AG04450 (cell line): ENCODE measurements at regions of chr5 and their contacts with region 1.

Region 1: GRCh38 chr5:15995341-15996052 is 184.1 kb downstream of the MARCHF11 start:
- DNase-seq: no peak
- H3K4me3 ChIP-seq: no peak overlapping the region
- H3K27ac ChIP-seq: no peak overlapping the region
- H3K27me3 ChIP-seq: no peaks in the 10 kb centered on the region
- CTCF ChIP-seq: peak; percentile 73

Region 2: GRCh38 chr5:15105796-15106393 is 889.6 kb before region 1 on chr5:
- CTCF ChIA-PET with region 1: interaction called, 66 read pairs
- POLR2A ChIA-PET with region 1: no interaction called
- DNase-seq: no peak
- H3K4me3 ChIP-seq: no peak overlapping the region
- H3K27ac ChIP-seq: no peak overlapping the region
- H3K27me3 ChIP-seq: no peaks in the 10 kb centered on the region
- CTCF ChIP-seq: peak; percentile 82

Region 3: GRCh38 chr5:15383469-15383868 is 612.0 kb before region 1 on chr5:
- CTCF ChIA-PET with region 1: interaction called, 31 read pairs
- POLR2A ChIA-PET with region 1: no interaction called
- DNase-seq: no peak
- H3K4me3 ChIP-seq: no peak overlapping the region
- H3K27ac ChIP-seq: no peak overlapping the region
- H3K27me3 ChIP-seq: no peaks in the 10 kb centered on the region
- CTCF ChIP-seq: peak; percentile 68

Region 4: GRCh38 chr5:15463231-15463980 is 532.1 kb before region 1 on chr5:
- CTCF ChIA-PET with region 1: interaction called, 31 read pairs
- POLR2A ChIA-PET with region 1: no interaction called
- DNase-seq: peak; percentile 3
- H3K4me3 ChIP-seq: no peak overlapping the region
- H3K27ac ChIP-seq: no peak overlapping the region
- H3K27me3 ChIP-seq: no peaks in the 10 kb centered on the region
- CTCF ChIP-seq: peak; percentile 66

Region 5: DNA sequence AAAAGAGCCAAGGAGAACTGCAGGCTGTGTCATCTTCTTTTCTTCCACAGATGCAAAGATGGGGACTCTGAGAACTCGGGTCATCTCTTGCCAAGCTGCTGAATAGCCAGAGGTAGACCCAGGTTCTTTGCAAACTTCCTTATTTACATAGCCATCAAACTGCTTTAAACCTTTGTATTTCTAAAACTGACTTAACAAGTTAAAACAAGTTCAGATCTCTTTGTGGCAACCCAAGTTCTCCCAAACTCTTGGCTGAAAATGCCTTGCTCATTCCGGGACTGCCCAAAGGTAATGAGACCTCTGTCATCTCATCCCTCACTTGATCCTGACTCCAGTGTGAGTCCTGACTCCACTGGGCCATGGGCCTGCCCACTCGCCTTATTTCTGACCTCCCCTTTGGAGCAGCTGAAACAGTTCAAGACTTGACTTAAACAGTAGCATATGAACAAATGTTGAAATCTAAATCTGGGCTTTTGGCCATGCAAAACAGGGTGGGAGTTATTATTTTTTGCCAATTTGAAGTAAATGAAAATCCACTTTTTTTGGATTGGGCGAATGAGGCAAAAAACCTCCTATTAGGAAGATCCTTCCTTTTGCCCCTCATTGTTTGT is 444.9 kb before region 1 on chr5:
- CTCF ChIA-PET with region 1: no interaction called
- POLR2A ChIA-PET with region 1: no interaction called
- DNase-seq: no peak
- H3K4me3 ChIP-seq: no peak overlapping the region
- H3K27ac ChIP-seq: no peak overlapping the region
- H3K27me3 ChIP-seq: no peaks in the 10 kb centered on the region
- CTCF ChIP-seq: no peak

Region 6: GRCh38 chr5:15807871-15808270 is 187.6 kb before region 1 on chr5:
- CTCF ChIA-PET with region 1: interaction called, 13 read pairs
- POLR2A ChIA-PET with region 1: no interaction called
- DNase-seq: no peak
- H3K4me3 ChIP-seq: no peak overlapping the region
- H3K27ac ChIP-seq: no peak overlapping the region
- H3K27me3 ChIP-seq: no peaks in the 10 kb centered on the region
- CTCF ChIP-seq: peak; percentile 36

Region 7: GRCh38 chr5:15823398-15823797 is 172.1 kb before region 1 on chr5:
- CTCF ChIA-PET with region 1: interaction called, 32 read pairs
- POLR2A ChIA-PET with region 1: no interaction called
- DNase-seq: no peak
- H3K4me3 ChIP-seq: no peak overlapping the region
- H3K27ac ChIP-seq: no peak overlapping the region
- H3K27me3 ChIP-seq: no peaks in the 10 kb centered on the region
- CTCF ChIP-seq: no peak

Region 8: DNA sequence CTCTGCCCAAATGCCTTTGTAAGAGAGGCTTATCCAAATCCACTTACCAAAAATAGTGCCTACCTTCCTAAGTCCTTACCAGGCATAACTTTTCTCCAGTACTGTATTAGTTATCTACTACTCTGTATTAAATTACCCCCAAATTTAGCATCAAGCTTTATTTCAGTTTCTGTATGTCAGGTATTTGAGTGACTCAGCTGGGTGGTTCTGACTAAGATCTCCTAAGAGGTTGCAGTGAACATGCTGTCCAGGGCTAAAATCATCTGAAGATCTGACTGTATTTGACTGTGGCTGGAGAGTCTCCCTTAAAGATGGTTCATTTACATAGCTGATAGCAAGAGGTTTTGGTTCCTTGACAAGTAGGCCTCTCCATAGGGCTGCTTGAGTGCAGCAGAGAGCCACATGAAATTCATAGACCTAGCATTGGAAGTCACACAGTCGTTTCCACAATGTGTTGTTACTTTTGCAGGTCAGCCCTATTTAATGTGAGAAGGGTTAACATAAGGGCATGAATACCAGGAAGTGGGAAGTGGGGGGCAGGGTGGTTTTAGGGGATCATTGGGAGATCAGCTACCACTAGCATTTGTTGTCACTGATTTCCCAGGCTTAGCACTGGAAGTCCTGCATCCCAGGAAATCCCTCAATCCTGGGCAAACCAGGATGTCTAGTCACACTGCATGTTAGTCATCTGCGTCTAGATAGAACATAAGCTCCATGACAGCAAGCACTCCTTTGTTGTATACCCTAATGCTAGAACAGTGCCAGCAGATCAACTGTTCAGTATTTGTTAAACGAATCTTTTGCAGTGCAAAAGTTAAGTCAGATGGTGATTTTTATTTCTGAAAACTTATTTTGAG is 472.1 kb after region 1 on chr5:
- CTCF ChIA-PET with region 1: no interaction called
- POLR2A ChIA-PET with region 1: no interaction called
- DNase-seq: peak; percentile 16
- H3K4me3 ChIP-seq: no peak overlapping the region; the same call in 1 of the 2 replicates
- H3K27ac ChIP-seq: no peak overlapping the region
- H3K27me3 ChIP-seq: no peaks in the 10 kb centered on the region
- CTCF ChIP-seq: no peak